Mammary epithelial cell (primary cell): ENCODE measurements at regions of chr6 and their contacts with region 1.

Region 1: GRCh38 chr6:152416652-152417051 is 220.5 kb downstream of the SYNE1 start:
- DNase-seq: no peak
- H3K4me3 ChIP-seq: no peak overlapping the region
- H3K27ac ChIP-seq: no peak overlapping the region
- H3K4me1 ChIP-seq: no peaks in the 10 kb centered on the region
- H3K27me3 ChIP-seq: peaks cover 2% of the 10 kb centered on the region
- CTCF ChIP-seq: no peak

Region 2: DNA sequence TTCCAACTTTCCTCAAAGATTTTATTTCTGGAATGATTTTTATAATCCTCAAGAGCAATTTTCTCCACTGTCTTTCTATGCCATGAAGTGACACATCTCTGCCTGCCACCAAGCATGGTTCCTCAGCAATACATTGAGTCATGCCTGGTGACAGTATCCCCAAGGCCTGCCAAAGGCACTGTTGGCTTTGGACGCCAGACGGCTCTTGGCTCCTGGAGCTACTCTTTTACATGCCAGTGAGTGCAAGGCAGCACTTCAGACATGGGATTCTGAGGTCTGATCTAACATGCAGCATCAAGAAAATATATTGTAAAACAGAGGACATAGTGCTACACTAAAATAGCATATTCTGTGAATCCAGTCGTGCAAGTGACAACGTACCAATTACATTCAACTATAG is 1837.0 kb before region 1 on chr6:
- CTCF ChIA-PET with region 1: no interaction called
- dilution Hi-C with region 1: no loop called
- in situ Hi-C with region 1: no loop called
- intact Hi-C with region 1: no loop called
- DNase-seq: no peak
- H3K4me3 ChIP-seq: no peak overlapping the region
- H3K27ac ChIP-seq: no peak overlapping the region
- H3K4me1 ChIP-seq: no peaks in the 10 kb centered on the region
- H3K27me3 ChIP-seq: no peaks in the 10 kb centered on the region
- CTCF ChIP-seq: no peak

Region 3: GRCh38 chr6:152458648-152459644 is 42.3 kb after region 1 on chr6:
- CTCF ChIA-PET with region 1: no interaction called
- dilution Hi-C with region 1: loop called (anchors 5 kb)
- in situ Hi-C with region 1: no loop called
- intact Hi-C with region 1: no loop called
- DNase-seq: no peak
- H3K4me3 ChIP-seq: no peak overlapping the region
- H3K27ac ChIP-seq: no peak overlapping the region
- H3K4me1 ChIP-seq: peaks cover 3% of the 10 kb centered on the region
- H3K27me3 ChIP-seq: no peaks in the 10 kb centered on the region
- CTCF ChIP-seq: no peak